Keratinocyte (primary cell): ENCODE measurements at regions of chr4 and their contacts with region 1.

Region 1: DNA sequence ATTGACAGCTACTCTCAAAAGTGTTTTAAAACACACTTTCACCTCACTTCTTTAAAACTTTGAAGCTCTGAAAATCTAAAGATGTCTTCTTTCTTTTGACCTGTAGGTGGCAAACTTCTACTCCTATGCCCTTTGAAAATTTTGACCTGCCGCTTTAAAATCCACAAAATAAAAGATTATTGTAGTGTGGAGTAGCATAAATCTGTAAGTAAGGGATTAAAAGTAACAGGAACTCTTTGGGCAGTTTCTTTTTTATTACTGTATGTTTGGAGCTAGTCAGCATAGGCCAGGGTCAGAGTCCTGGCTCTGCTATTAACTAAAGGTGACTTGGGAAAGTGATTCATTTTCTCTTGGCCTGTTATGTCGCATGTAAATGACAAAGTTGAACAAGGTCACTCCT is 25.5 kb downstream of the BBS12 start:
- DNase-seq: no peak
- H3K4me3 ChIP-seq: no peak overlapping the region
- H3K27ac ChIP-seq: no peak overlapping the region
- H3K4me1 ChIP-seq: peaks cover 4% of the 10 kb centered on the region
- H3K27me3 ChIP-seq: no peaks in the 10 kb centered on the region
- CTCF ChIP-seq: peak in 2 of 3 experiments; percentile 50 to 56

Region 2: DNA sequence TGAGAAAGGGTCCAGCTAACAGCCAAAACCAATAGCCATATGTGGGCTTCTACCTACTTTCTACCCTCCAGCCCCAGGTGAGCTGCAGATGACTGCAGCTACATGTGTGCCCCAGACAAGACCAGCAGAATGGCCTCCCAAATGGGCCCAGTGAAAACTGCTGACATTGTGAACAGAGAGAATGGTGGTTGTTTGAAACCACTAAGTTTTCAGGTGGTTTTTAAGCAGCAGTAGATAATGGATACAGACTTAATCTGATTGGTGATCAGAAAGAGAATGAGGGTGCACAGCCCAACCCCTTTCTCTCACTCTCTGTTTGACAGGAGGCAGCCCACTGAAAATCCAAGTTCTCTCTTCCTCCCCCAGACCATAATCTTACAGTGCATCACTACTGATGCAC is 68.1 kb before region 1 on chr4:
- dilution Hi-C with region 1: no loop called
- DNase-seq: no peak
- H3K4me3 ChIP-seq: no peak overlapping the region
- H3K27ac ChIP-seq: no peak overlapping the region
- H3K4me1 ChIP-seq: no peaks in the 10 kb centered on the region
- H3K27me3 ChIP-seq: no peaks in the 10 kb centered on the region
- CTCF ChIP-seq: no peak

Region 3: GRCh38 chr4:122922877-122923511 is 165.0 kb after region 1 on chr4:
- dilution Hi-C with region 1: loop called (anchors 25 kb)
- DNase-seq: peak; percentile 9
- H3K4me3 ChIP-seq: peak overlapping the region; percentile 76 to 100 (median 88)
- H3K27ac ChIP-seq: peak overlapping the region; percentile 81
- H3K4me1 ChIP-seq: peaks cover 9% of the 10 kb centered on the region
- H3K27me3 ChIP-seq: no peaks in the 10 kb centered on the region
- CTCF ChIP-seq: no peak

Region 4: GRCh38 chr4:122946142-122946541 is 188.1 kb after region 1 on chr4:
- dilution Hi-C with region 1: no loop called
- DNase-seq: no peak
- H3K4me3 ChIP-seq: no peak overlapping the region
- H3K27ac ChIP-seq: no peak overlapping the region
- H3K4me1 ChIP-seq: no peaks in the 10 kb centered on the region
- H3K27me3 ChIP-seq: no peaks in the 10 kb centered on the region
- CTCF ChIP-seq: no peak

Region 5: DNA sequence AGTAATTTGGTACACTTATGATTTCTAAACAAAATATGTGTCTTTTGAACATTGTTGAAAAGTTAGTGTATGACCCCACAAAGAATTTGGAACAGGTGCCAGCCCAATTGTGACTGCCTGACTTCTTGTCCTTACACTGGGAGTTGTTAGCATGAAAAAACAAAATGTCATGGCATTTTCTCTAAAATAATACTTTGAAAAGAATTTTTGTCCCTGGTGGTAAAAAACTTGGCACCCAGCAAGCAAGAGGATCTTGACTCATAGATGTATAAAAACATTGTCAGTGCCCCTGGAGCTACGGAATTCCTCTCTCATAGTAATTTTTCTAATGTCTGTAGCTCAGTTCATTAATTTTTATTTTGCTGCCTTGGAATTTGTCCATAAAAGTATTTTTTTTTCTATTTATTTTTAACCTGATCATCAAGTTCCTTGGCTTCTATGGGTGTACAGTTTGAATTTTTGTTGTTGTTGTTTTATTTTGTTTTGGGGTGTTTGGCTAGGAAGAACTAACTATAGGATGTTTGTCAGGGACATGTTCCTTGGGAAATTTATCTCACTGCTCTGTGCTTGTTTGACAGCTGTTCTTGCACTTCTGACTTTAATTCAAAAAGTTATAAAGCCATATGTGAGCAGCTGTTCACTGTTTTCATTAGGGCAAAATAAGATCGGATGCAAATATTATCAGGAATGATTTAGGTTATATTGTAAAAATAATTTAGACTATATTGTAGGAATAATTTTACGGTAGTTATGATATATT is 259.8 kb after region 1 on chr4:
- dilution Hi-C with region 1: no loop called
- DNase-seq: no peak
- H3K4me3 ChIP-seq: no peak overlapping the region
- H3K27ac ChIP-seq: no peak overlapping the region
- H3K4me1 ChIP-seq: peaks cover 9% of the 10 kb centered on the region
- H3K27me3 ChIP-seq: no peaks in the 10 kb centered on the region
- CTCF ChIP-seq: no peak